CD4-positive, alpha-beta T cell (primary cell): ENCODE measurements at regions of chr6 and their contacts with region 1.

Region 1: GRCh38 chr6:139124887-139125672 is 9.8 kb upstream of the HECA start:
- DNase-seq: peak; percentile 60 to 95 (median 76)
- ATAC-seq: peak; percentile 98
- H3K4me3 ChIP-seq: peak overlapping the region; percentile 1
- H3K4me3 Mint-ChIP-seq: peak overlapping the region; percentile 66
- H3K27ac ChIP-seq: peak overlapping the region; percentile 64 to 66
- H3K27ac Mint-ChIP-seq: peak overlapping the region; percentile 88
- H3K4me1 ChIP-seq: peaks cover 40% of the 10 kb centered on the region
- H3K4me1 Mint-ChIP-seq: peaks cover 57% of the 10 kb centered on the region
- H3K27me3 ChIP-seq: no peaks in the 10 kb centered on the region
- H3K27me3 Mint-ChIP-seq: no peaks in the 10 kb centered on the region
- CTCF ChIP-seq: peak; percentile 80

Region 2: GRCh38 chr6:139028658-139029469 is 96.2 kb before region 1 on chr6 and contains the start of gene ABRACL:
- CTCF ChIA-PET with region 1: no interaction called
- POLR2A ChIA-PET with region 1: interaction called, 25 read pairs
- intact Hi-C with region 1: loop called in 1 of 2 experiments (anchors 5 kb)
- DNase-seq: peak; percentile 48 to 88 (median 69)
- ATAC-seq: peak; percentile 89
- H3K4me3 ChIP-seq: peak within 1 kb of the TSS; percentile 85
- H3K4me3 Mint-ChIP-seq: peak within 1 kb of the TSS; percentile 97
- H3K27ac ChIP-seq: peak within 1 kb of the TSS; percentile 84 to 90
- H3K27ac Mint-ChIP-seq: peak within 1 kb of the TSS; percentile 96
- H3K4me1 ChIP-seq: peaks cover 20% of the 10 kb centered on the region
- H3K4me1 Mint-ChIP-seq: peaks cover 35% of the 10 kb centered on the region
- H3K27me3 ChIP-seq: no peaks in the 10 kb centered on the region
- H3K27me3 Mint-ChIP-seq: no peaks in the 10 kb centered on the region
- CTCF ChIP-seq: no peak
- total RNA-seq, gene ABRACL: 36.8 to 40.6 TPM

Region 3: DNA sequence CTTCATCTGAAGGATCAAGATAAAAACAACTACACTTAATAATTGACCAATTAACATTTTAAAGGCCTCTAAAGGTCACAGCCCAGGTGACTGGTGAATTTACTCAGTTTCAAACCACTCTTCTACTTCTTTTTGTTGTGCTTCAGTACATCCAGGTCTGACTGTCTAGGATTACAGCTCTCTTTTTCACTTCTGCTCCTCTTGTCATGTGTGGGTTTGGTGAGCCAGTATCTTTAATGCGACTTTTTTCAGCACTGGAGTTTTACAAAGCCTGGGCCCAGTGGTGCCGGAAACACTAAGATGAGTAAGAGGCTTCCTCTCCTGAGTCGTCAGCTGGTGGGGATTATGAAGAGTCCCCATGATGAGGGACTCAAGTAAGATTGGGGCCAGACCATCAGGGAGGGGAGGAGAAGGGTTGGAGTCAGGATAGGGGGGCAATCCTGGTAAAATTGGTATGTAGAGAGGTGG is 36.8 kb after region 1 on chr6:
- CTCF ChIA-PET with region 1: interaction called, 11 read pairs
- POLR2A ChIA-PET with region 1: interaction called, 34 read pairs
- intact Hi-C with region 1: loop called in 1 of 2 experiments (anchors 5 kb)
- DNase-seq: peak in 13 of 14 experiments; percentile 46 to 84 (median 66)
- ATAC-seq: peak; percentile 55
- H3K4me3 ChIP-seq: peak overlapping the region; percentile 11
- H3K4me3 Mint-ChIP-seq: peak overlapping the region; percentile 76
- H3K27ac ChIP-seq: peak overlapping the region; percentile 32 to 70
- H3K27ac Mint-ChIP-seq: peak overlapping the region; percentile 84
- H3K4me1 ChIP-seq: peaks cover 94% of the 10 kb centered on the region
- H3K4me1 Mint-ChIP-seq: peaks cover 88% of the 10 kb centered on the region
- H3K27me3 ChIP-seq: no peaks in the 10 kb centered on the region
- H3K27me3 Mint-ChIP-seq: no peaks in the 10 kb centered on the region
- CTCF ChIP-seq: no peak

Region 4: DNA sequence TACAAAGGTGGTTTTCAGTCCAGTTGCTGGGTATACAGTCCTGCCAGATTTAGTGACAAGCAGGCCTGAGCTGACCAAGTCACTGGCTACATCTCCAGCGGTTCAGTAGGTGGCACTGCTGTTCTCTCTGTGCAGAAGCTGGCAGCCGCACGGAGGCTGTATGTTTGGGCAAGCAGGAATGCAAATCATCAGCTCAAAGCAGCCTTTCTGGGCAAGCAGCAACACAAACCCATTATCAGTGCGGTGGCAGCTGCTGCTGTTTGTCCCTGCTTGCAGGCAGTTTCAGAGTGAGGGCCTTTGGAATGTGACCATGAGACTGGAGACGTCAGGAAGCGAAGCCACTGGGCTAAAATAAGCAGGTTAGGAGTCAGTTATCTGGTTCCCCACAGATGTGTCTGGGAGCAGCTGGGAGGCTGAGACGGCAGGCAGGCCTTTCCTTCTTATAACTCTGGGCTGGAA is 94.2 kb after region 1 on chr6:
- CTCF ChIA-PET with region 1: interaction called, 18 read pairs
- POLR2A ChIA-PET with region 1: interaction called, 13 read pairs
- intact Hi-C with region 1: loop called in 1 of 2 experiments (anchors 2 kb)
- DNase-seq: peak; percentile 47 to 87 (median 68)
- ATAC-seq: peak; percentile 98
- H3K4me3 ChIP-seq: no peak overlapping the region
- H3K4me3 Mint-ChIP-seq: no peak overlapping the region
- H3K27ac ChIP-seq: no peak overlapping the region
- H3K27ac Mint-ChIP-seq: peak overlapping the region; percentile 1
- H3K4me1 ChIP-seq: peaks cover 8% of the 10 kb centered on the region
- H3K4me1 Mint-ChIP-seq: peaks cover 16% of the 10 kb centered on the region
- H3K27me3 ChIP-seq: no peaks in the 10 kb centered on the region
- H3K27me3 Mint-ChIP-seq: no peaks in the 10 kb centered on the region
- CTCF ChIP-seq: peak; percentile 85

Region 5: DNA sequence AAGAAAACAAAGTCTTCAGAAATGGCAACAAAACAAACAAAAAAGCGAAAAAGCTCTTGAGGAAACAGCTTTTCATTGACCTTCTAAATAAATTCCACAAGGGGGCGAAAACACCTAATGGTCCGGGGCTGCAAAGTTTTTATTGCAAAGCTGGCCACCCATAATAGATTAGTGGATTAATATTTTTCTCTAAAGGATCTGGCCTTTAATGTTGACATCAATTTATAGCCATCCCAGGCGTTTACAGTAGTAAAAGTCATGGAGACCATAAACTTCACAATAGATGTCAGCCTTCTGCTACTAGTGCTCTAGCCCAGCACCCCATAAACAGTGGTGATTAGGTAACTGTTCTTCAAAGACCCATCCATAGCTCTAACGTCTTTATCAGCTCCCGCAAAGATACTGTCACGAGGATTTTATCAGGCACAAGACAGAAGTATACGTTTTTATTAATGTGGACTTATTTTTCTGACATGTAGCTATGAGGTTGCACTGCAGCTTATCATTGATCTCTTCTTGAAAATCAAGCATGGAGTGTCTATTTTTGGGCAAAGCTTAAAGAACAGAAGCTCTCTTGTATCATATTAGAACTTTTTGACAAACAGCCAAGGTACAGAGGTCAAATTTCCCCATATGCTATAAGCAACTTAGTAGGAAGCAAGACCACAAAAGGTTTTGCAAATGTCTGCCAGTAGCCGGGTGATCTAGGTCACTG is 244.6 kb after region 1 on chr6:
- CTCF ChIA-PET with region 1: interaction called, 21 read pairs
- POLR2A ChIA-PET with region 1: interaction called, 31 read pairs
- intact Hi-C with region 1: loop called (anchors 1 to 2 kb)
- DNase-seq: peak in 4 of 14 experiments; percentile 40 to 71 (median 64)
- ATAC-seq: no peak
- H3K4me3 ChIP-seq: no peak overlapping the region
- H3K4me3 Mint-ChIP-seq: peak overlapping the region; percentile 98
- H3K27ac ChIP-seq: peak overlapping the region; percentile 14 to 33
- H3K27ac Mint-ChIP-seq: peak overlapping the region; percentile 97
- H3K4me1 ChIP-seq: peaks cover 20% of the 10 kb centered on the region
- H3K4me1 Mint-ChIP-seq: peaks cover 50% of the 10 kb centered on the region
- H3K27me3 ChIP-seq: no peaks in the 10 kb centered on the region
- H3K27me3 Mint-ChIP-seq: no peaks in the 10 kb centered on the region
- CTCF ChIP-seq: peak; percentile 82